Activated T-helper 1 cell treated with anti-CD3 and anti-CD28 coated beads, Interleukin-12 subunit alpha, Interleukin-12 subunit beta, Interleukin-2, Interleukin-4 antibody, amounts not matched to agents 30 ng/mL and 10 ng/mL and 1 ng/mL, durations not matched to agents 14 hours and 24 hours and 36 hours (primary cell): ENCODE measurements at regions of chr15 and their contacts with region 1.

Region 1: GRCh38 chr15:74291101-74292071 is 55.3 kb downstream of the CCDC33 start:
- DNase-seq: peak; percentile 65
- H3K4me3 Mint-ChIP-seq: no peak overlapping the region
- H3K27ac Mint-ChIP-seq: no peak overlapping the region
- H3K4me1 Mint-ChIP-seq: peaks cover 15% of the 10 kb centered on the region
- H3K27me3 Mint-ChIP-seq: peaks cover 8% of the 10 kb centered on the region

Region 2: GRCh38 chr15:74265046-74265639 is 26.2 kb before region 1 on chr15:
- intact Hi-C with region 1: loop called (anchors 1 kb)
- DNase-seq: no peak
- H3K4me3 Mint-ChIP-seq: no peak overlapping the region
- H3K27ac Mint-ChIP-seq: no peak overlapping the region
- H3K4me1 Mint-ChIP-seq: no peaks in the 10 kb centered on the region
- H3K27me3 Mint-ChIP-seq: peaks cover 7% of the 10 kb centered on the region

Region 3: GRCh38 chr15:74732846-74733245 is 441.5 kb after region 1 on chr15:
- intact Hi-C with region 1: no loop called
- DNase-seq: no peak
- H3K4me3 Mint-ChIP-seq: no peak overlapping the region
- H3K27ac Mint-ChIP-seq: no peak overlapping the region
- H3K4me1 Mint-ChIP-seq: peaks cover under 1% of the 10 kb centered on the region
- H3K27me3 Mint-ChIP-seq: peaks cover 6% of the 10 kb centered on the region